Calu3 (cell line): ENCODE measurements at regions of chr1 and their contacts with region 1.

Region 1: DNA sequence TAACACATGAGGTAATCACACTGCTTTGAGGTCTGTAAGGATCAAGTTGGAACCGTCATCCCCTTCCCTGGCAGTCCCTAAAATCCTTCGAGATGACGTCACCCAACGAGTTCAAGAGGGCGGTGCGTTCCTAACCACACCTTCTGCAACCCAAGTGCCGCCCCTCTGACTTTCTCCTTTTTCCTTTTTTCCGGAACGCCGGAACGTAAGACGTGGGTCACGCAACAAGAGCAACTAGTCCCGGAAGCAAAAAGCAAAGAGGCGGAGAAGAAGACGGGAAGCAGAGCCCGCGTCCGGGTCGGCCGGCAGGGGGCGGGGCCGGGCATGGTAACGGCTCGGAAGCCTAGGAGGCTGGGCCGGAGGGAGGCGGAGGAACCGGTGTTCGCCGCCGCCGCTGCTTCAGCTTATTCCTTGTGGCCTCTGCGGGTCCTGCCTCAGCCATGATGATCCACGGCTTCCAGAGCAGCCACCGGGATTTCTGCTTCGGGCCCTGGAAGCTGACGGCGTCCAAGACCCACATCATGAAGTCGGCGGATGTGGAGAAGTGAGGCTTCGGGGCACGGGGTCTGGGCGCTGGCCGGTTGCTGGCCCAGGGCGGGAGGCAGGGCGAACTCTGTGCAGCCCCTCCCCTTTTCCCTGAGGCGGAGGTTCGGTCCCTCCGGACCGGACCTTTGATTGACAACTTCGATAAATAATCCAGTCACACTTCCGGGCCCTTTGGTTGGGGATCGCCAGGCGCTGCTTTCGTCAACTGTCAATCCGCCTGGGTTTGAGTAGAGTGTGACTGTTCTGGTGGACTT is at the start of gene TIPRL:
- DNase-seq: peak; percentile 99
- H3K4me3 Mint-ChIP-seq: no peak within 1 kb of the TSS
- H3K27ac Mint-ChIP-seq: no peak within 1 kb of the TSS
- H3K4me1 Mint-ChIP-seq: no peaks in the 10 kb centered on the region
- H3K27me3 Mint-ChIP-seq: no peaks in the 10 kb centered on the region
- CTCF ChIP-seq: peak; percentile 83
- total RNA-seq, gene TIPRL: 36.6 and 41.6 TPM in 2 replicates

Region 2: GRCh38 chr1:168225476-168226190 is 46.8 kb after region 1 on chr1 and contains the start of gene SFT2D2:
- CTCF ChIA-PET with region 1: interaction called, 4 read pairs
- intact Hi-C with region 1: loop called (anchors 2 kb)
- DNase-seq: peak; percentile 94
- H3K4me3 Mint-ChIP-seq: peak within 1 kb of the TSS; percentile 85
- H3K27ac Mint-ChIP-seq: peak within 1 kb of the TSS; percentile 86
- H3K4me1 Mint-ChIP-seq: peaks cover 58% of the 10 kb centered on the region
- H3K27me3 Mint-ChIP-seq: no peaks in the 10 kb centered on the region
- CTCF ChIP-seq: no peak
- total RNA-seq, gene SFT2D2: 88.2 and 98.3 TPM in 2 replicates

Region 3: GRCh38 chr1:168520052-168520751 is 341.4 kb after region 1 on chr1:
- CTCF ChIA-PET with region 1: no interaction called
- intact Hi-C with region 1: no loop called
- DNase-seq: no peak
- H3K4me3 Mint-ChIP-seq: no peak overlapping the region
- H3K27ac Mint-ChIP-seq: no peak overlapping the region
- H3K4me1 Mint-ChIP-seq: peaks cover 10% of the 10 kb centered on the region
- H3K27me3 Mint-ChIP-seq: no peaks in the 10 kb centered on the region
- CTCF ChIP-seq: no peak